ENCODE measurements at regions of chr16 and their contacts with region 1.

Region 1: DNA sequence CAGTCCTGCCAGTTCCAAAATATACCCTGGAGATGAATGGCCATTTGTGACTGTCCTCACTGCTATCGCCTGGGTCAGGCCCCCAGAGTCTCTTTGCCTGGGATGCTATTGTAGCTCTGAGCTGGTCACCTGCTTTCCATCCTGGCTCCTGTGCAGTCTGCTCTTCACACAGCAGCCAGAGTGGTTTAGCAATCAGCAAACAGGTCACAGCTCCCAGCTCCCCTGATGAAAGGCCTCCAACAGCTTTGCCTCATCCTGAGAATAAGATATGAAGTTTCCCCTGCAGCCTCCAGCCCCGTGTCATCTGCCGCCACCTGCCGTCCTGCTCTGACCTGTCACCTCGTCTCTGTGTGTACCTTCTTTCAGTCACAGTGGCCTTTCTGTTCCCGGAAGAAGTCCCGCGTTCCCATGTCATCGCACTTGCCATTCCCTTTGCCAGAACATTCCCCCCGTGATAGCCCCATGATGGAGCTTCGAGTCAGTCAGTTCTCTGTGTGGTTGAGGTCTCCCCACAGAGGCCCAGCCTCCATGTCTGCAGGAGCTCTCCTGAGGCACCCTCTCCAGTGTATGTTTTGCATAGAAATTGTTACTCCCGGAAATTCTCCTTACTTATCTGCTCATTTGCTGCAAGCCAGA is 281.5 kb downstream of the SNX29 start:
- DNase-seq: peak; percentile 95
- ATAC-seq: peak; percentile 86
- H3K4me3 ChIP-seq: 0 out of 6 replicates have a peak overlapping the region, but pooled peaks of 2 of the 3 experiments have one; percentile 4 to 10
- H3K27ac ChIP-seq: no peak overlapping the region
- H3K4me1 ChIP-seq: peaks cover 66% of the 10 kb centered on the region
- H3K27me3 ChIP-seq: no peaks in the 10 kb centered on the region
- CTCF ChIP-seq: peak; percentile 100
- EP300 ChIP-seq: peak in 1 of 2 experiments; percentile 68; a peak in 3 of 4 replicates
- POLR2A ChIP-seq: no peak
- RAD21 ChIP-seq: peak; percentile 99

Region 2: GRCh38 chr16:12168074-12169000 is 89.7 kb before region 1 on chr16:
- CTCF ChIA-PET with region 1: no interaction called
- POLR2A ChIA-PET with region 1: no interaction called
- in situ Hi-C with region 1: no loop called
- intact Hi-C with region 1: no loop called
- DNase-seq: no peak
- ATAC-seq: no peak
- H3K4me3 ChIP-seq: no peak overlapping the region
- H3K27ac ChIP-seq: no peak overlapping the region
- H3K4me1 ChIP-seq: peaks cover 7% of the 10 kb centered on the region; the same call in 1 of the 2 replicates
- H3K27me3 ChIP-seq: no peaks in the 10 kb centered on the region
- CTCF ChIP-seq: no peak
- EP300 ChIP-seq: no peak
- POLR2A ChIP-seq: no peak
- RAD21 ChIP-seq: no peak

Region 3: GRCh38 chr16:12178251-12178990 is 79.6 kb before region 1 on chr16:
- CTCF ChIA-PET with region 1: interaction called, 4 read pairs
- POLR2A ChIA-PET with region 1: interaction called, 5 read pairs
- in situ Hi-C with region 1: no loop called
- intact Hi-C with region 1: loop called (anchors 1 kb)
- DNase-seq: no peak
- ATAC-seq: no peak
- H3K4me3 ChIP-seq: no peak overlapping the region
- H3K27ac ChIP-seq: no peak overlapping the region
- H3K4me1 ChIP-seq: peaks cover 12% of the 10 kb centered on the region
- H3K27me3 ChIP-seq: no peaks in the 10 kb centered on the region
- CTCF ChIP-seq: no peak
- EP300 ChIP-seq: no peak
- POLR2A ChIP-seq: no peak
- RAD21 ChIP-seq: no peak

Region 4: DNA sequence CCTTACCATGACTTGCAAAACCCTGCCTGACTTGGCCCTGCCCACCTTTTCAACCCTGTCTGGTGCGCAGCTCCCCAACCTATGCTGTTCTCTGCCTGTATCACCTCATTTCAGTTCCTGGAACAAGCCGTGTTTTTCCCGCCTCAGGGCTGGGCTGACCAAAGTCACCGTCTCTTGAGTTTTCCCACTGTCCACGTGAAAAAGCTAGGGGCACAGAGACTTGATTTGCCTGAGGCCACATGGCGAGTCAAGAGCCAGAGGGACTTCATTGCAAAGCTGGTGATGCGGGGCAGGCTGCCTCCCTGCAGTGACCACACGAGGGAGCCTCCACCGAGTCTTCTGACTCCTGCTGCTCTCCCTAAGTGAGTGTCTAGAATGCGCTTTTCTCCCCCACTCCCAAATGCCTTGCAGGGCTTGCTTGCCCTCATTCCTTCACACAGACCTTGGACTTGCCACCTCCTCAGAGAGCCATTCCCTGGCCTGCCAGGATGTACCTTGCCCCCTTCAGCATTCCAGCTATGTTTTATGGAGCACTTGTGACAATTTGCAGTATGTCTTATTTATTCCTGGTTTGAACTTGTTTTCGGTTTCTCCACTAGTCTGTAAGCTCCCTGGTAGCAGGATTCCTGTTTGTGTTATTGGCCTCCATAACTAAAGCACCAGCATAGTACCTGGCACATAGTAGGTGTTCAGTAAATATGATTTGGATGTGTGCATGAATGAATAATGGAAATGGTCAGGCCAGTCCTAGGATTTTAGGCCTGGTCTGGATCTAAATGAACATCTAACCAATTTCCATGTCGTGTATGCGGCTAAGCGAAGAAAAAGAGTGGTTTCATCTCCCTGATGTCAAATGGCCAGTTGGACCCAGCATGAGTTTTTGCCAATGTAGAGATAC is 29.2 kb before region 1 on chr16:
- CTCF ChIA-PET with region 1: interaction called, 20 read pairs
- POLR2A ChIA-PET with region 1: interaction called, 29 read pairs
- in situ Hi-C with region 1: loop called (anchors 5 kb)
- intact Hi-C with region 1: loop called (anchors 1 kb)
- DNase-seq: peak; percentile 70
- ATAC-seq: peak; percentile 93
- H3K4me3 ChIP-seq: peak overlapping the region in 2 of 3 experiments; percentile 1 to 44; a peak in 2 of 6 replicates
- H3K27ac ChIP-seq: no peak overlapping the region
- H3K4me1 ChIP-seq: peaks cover 56% of the 10 kb centered on the region
- H3K27me3 ChIP-seq: no peaks in the 10 kb centered on the region
- CTCF ChIP-seq: peak; percentile 98
- EP300 ChIP-seq: no peak
- POLR2A ChIP-seq: no peak
- RAD21 ChIP-seq: peak; percentile 94

Region 5: GRCh38 chr16:12289175-12290063 is 31.4 kb after region 1 on chr16:
- CTCF ChIA-PET with region 1: no interaction called
- POLR2A ChIA-PET with region 1: interaction called, 18 read pairs
- in situ Hi-C with region 1: no loop called
- intact Hi-C with region 1: loop called (anchors 1 kb)
- DNase-seq: peak; percentile 89
- ATAC-seq: peak; percentile 94
- H3K4me3 ChIP-seq: peak overlapping the region; percentile 44 to 59 (median 52)
- H3K27ac ChIP-seq: peak overlapping the region; percentile 81
- H3K4me1 ChIP-seq: peaks cover 75% of the 10 kb centered on the region
- H3K27me3 ChIP-seq: no peaks in the 10 kb centered on the region
- CTCF ChIP-seq: peak; percentile 58
- EP300 ChIP-seq: peak; percentile 19 to 74; a peak in 3 of 4 replicates
- POLR2A ChIP-seq: peak; percentile 44 to 57; a peak in 3 of 4 replicates
- RAD21 ChIP-seq: peak; percentile 36; the same call in 1 of the 2 replicates